Caki2 (cell line): ENCODE measurements at regions of chr9 and their contacts with region 1.

Region 1: GRCh38 chr9:72038890-72039410 is 21.5 kb downstream of the C9orf57 start:
- DNase-seq: peak; percentile 78

Region 2: GRCh38 chr9:71975833-71976232 is 63.1 kb before region 1 on chr9:
- in situ Hi-C with region 1: no loop called
- DNase-seq: no peak

Region 3: GRCh38 chr9:72154468-72155281 is 115.7 kb after region 1 on chr9:
- in situ Hi-C with region 1: loop called (anchors 25 kb)
- DNase-seq: peak; percentile 94

Region 4: GRCh38 chr9:72271613-72272478 is 232.9 kb after region 1 on chr9:
- in situ Hi-C with region 1: loop called (anchors 25 kb)
- DNase-seq: peak; percentile 38

Region 5: GRCh38 chr9:72592502-72593403 is 553.8 kb after region 1 on chr9:
- in situ Hi-C with region 1: loop called (anchors 25 kb)
- DNase-seq: peak; percentile 61

Region 6: DNA sequence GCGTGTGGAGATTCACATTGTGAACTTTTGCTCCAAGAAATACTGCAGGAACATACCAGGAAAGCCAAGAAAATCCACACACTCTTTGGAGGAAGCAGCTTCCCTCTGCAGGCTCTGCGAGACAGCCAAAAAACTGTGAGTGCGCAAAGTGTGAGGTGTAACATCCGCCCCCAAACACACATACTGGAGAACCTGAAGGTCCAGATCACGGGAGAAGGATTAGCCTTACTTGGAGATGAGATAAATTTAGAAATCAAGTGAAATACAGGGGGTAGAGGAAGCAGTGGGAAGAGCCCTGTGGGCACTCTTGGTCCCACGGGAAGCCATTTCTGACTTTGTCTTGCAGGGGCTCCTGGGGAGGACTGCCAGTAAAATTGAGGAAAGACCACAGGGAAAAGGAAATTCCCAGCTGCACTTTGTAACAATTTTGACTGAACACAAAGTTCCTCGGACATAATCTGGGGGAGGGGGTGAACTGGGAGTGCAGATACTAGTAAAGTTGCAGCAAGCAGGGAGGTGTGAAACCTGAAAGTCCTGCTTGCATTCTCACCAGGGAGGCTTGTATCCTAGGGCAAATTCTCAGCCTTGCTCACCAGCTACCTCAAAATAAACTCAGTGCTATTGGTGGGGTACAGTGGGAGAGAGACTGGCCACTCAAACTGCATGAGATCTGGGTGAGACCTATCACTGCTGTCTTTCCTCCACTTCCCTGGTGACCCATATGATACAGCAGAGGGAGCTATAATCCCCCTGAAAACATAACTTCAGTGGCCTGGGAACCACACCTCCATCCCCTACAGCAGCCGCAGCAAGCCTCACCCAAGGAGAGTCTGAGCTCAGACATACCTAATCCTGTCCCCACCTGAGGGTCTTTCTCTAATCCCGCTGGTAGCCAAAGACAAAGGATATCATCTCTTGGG is 804.8 kb after region 1 on chr9:
- in situ Hi-C with region 1: loop called (anchors 25 kb)
- DNase-seq: no peak